Prostate gland (tissue), 2 donors: ENCODE measurements at regions of chr14 and their contacts with region 1.

Region 1: DNA sequence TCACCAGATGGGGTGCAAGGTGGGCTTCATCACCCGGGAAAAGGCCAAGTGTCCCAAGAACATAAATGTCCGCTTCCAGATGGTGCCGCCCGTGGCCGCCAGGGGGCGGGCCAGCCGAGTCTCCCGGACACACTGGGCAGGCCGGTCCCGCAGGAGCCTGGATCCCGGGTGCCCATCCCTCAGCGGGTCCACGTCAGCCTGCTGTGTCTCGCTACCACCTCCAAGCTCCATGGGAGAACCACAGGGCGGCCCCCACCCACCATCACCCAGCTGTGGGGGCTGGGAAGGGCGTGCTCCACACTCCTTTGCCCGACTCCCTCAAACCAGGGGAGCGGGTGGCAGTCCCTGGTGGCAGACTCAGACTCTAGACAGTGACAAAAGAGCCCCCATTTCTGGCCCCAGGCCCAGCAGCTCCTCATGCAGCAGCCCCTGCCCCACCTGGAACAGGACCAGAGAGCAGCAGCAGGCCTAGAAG is 22.0 kb upstream of the NUDT14 start:
- DNase-seq: peak; percentile 76
- H3K4me3 ChIP-seq: no peak overlapping the region
- H3K27ac ChIP-seq: no peak overlapping the region
- H3K4me1 ChIP-seq: no peaks in the 10 kb centered on the region
- H3K27me3 ChIP-seq: peaks cover 4% of the 10 kb centered on the region
- CTCF ChIP-seq: peak; percentile 90 to 94 (median 93)
- POLR2A ChIP-seq: no peak

Region 2: DNA sequence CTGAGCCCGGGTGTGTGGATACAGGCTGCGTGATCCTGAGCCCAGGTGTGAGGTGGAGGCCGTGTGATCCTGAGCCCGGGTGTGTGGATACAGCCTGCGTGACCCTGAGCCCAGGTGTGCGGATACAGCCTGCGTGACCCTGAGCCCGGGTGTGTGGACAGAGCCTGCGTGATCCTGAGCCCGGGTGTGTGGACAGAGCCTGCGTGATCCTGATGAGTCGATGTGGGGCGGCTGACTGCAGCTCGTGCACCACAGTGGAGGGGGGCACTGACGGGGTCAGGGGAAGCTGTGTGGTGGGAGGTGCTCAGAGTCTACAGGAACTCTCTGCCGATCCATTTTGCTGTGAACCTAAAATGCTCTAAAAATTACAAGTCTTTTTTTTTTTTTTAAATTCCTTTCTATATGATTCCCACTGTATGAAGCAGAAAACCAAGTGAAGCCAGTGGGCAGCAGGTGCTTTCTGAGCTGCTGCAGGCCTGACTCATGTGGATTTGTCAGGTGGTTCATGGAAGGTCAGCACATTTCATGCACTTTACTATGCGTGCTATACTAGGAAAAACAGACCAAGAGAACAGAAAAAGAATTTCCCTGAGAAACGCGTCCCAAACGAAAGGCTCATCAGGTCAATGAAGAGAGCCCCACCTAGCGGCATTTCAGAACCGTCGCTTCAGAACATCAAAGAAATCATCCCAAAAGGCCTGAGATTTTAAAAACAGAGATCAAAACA is 78.4 kb after region 1 on chr14:
- intact Hi-C with region 1: loop called (anchors 5 kb)
- DNase-seq: no peak
- H3K4me3 ChIP-seq: no peak overlapping the region
- H3K27ac ChIP-seq: no peak overlapping the region
- H3K4me1 ChIP-seq: no peaks in the 10 kb centered on the region
- H3K27me3 ChIP-seq: no peaks in the 10 kb centered on the region
- CTCF ChIP-seq: peak; percentile 20 to 66 (median 51)
- POLR2A ChIP-seq: no peak

Region 3: DNA sequence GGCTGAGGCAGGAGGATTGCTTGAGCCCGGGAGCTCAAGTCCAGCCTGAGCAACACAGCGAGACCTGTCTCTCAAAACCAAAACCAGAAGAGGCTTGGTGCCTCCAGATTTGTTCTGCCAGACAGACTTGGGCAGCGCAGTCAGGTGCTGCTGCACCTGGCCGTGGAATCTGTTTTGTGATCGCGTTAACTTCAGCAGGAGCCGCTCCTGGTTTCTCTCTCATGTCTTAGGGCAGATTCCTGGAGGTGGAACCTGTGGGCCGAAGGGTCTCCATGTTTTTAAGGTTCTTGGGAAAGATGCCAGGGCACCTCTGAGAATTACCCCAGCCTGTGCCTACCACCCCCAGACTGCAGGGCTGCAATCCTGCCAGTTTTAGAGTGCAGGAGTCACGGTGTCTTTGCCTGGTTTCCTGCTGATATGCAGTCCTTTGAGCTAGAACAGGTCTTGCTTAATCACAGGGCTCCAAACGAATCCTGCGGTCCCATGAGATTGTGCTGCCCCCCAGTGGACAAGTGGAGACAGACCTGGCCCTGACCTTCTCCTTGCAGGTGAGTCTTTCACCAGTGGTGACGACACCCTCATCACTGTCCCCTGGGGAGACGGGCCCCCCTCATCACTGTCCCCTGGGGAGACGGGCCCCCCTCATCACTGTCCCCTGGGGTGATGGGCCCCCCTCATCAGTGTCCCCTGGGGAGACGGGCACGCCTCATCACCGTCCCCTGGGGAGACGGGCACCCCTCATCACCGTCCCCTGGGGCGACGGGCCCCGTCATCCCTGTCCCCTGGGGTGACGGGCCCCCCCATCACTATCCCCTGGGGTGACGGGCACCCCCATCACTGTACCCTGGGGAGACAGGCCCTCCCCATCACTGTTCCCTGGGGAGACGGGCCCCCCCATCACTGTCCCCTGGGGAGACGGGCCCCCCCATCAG is 149.1 kb after region 1 on chr14:
- intact Hi-C with region 1: loop called (anchors 2 kb)
- DNase-seq: peak; percentile 87
- H3K4me3 ChIP-seq: no peak overlapping the region
- H3K27ac ChIP-seq: no peak overlapping the region
- H3K4me1 ChIP-seq: no peaks in the 10 kb centered on the region
- H3K27me3 ChIP-seq: no peaks in the 10 kb centered on the region
- CTCF ChIP-seq: peak; percentile 59 to 90 (median 88)
- POLR2A ChIP-seq: no peak